ENCODE measurements at regions of chr1 and their contacts with region 1.

Region 1: DNA sequence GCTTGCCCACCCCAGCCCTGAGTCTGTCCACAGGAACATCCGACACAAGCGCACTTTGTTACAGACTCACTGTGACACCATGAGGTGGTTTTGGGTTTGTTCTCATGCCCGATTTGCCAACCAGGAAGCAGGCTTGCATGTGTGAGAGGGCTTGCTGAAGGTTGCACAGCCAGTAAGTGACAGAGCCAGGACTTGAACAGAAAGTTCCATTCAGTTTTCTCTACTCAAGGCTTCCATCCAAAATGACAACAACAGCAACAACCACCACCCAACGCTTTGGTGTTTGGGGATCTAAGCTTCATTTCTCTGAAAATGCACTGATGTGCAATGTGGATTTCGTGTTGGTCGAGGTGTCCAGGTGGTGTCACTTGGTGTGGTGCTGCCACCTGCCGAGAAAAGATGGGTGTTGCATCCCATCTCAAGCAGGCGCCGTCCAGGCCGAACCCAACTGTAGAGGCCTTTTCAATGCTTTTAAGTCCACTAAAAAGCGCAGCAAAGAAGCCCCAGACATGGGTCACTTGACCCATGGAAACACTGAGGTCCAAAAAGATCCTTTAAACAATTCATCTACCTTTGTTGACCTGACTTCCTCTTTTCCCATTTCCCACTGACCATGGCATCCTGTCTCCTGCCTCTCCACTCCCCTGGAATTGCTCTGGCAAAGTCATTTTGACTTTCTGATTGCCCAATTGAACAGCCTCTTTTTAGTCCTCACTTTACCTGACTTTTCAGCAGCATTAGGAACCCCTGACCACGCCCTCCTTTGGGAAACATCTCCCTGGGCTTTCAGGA is 12.2 kb downstream of the CITED4 start:
- DNase-seq: peak in 1 of 2 donors; percentile 74
- ATAC-seq: peak; percentile 91
- H3K4me3 ChIP-seq: no peak overlapping the region
- H3K27ac ChIP-seq: no peak overlapping the region
- H3K4me1 ChIP-seq: no peaks in the 10 kb centered on the region
- H3K27me3 ChIP-seq: no peaks in the 10 kb centered on the region

Region 2: DNA sequence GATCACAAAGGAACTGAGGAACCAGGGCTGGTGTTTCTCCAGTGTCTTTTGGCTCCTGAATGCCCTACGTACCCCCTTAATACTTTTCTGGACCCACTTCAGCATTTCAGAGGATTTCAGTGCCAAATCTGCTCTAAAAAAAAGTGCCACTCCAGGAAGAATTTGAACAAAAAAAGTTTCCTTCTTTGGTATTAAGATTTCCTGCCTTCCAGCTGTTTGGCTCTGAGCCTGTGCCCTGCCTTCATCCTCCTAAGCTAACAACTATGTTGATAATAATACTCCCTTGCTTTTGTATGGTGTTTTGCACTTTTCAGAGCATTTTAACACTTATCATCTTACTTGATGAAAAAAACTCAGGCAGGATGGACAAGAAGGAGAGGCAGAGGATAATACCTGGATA is 173.5 kb before region 1 on chr1:
- intact Hi-C with region 1: loop called in 1 of 2 experiments (anchors 10 kb)
- DNase-seq: no peak
- ATAC-seq: no peak
- H3K4me3 ChIP-seq: no peak overlapping the region
- H3K27ac ChIP-seq: no peak overlapping the region
- H3K4me1 ChIP-seq: peaks cover 0 to 2% of the 10 kb centered on the region in 2 donors
- H3K27me3 ChIP-seq: no peaks in the 10 kb centered on the region

Region 3: GRCh38 chr1:40774266-40774998 is 75.6 kb before region 1 on chr1:
- intact Hi-C with region 1: loop called (anchors 2 to 5 kb)
- DNase-seq: peak in 1 of 2 donors; percentile 86
- ATAC-seq: peak; percentile 57
- H3K4me3 ChIP-seq: no peak overlapping the region
- H3K27ac ChIP-seq: peak overlapping the region in 1 of 2 donors; percentile 64
- H3K4me1 ChIP-seq: no peaks in the 10 kb centered on the region
- H3K27me3 ChIP-seq: no peaks in the 10 kb centered on the region

Region 4: DNA sequence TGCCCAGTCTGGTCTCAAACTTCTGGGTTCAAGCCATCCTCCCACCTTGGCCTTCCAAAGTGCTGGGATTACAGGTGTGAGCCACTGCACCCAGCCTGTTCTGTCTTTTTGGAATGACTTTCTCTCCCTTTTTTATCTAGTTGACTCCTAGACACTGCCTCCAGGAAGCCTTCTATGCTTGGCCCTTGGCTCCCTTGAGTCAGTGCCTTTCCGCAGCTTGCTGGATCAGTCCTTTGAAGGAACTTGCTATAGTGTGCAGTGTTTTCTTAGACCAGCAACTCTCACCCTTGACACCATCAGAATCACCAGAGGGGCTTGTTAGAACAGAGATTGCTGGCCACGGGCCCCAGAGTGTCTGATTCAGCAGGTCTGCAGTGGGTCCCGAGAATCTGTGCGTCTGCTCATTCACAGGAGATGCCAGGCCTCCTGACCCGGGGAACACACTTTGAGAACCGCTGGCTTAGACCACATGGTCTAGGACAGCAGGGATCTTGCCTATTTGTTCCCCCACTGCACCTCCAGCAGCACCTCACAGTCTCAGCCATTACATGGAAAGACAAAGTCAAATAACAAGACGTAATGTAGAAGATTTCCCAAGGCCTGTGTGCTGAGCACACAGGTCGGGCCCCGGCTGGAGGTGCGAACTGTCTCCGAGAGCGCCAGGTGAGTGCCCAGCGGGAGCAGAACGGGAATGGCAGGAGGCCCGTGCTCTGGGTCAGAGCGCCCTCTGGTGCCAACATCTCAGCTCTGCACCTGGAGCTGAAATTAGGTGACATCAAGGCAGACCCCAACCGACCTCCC is 102.1 kb after region 1 on chr1:
- intact Hi-C with region 1: loop called (anchors 1 kb)
- DNase-seq: peak; percentile 74 to 90
- ATAC-seq: peak; percentile 87
- H3K4me3 ChIP-seq: no peak overlapping the region
- H3K27ac ChIP-seq: no peak overlapping the region
- H3K4me1 ChIP-seq: no peaks in the 10 kb centered on the region
- H3K27me3 ChIP-seq: no peaks in the 10 kb centered on the region